ENCODE measurements at regions of chr6 and their contacts with region 1.

Region 1: DNA sequence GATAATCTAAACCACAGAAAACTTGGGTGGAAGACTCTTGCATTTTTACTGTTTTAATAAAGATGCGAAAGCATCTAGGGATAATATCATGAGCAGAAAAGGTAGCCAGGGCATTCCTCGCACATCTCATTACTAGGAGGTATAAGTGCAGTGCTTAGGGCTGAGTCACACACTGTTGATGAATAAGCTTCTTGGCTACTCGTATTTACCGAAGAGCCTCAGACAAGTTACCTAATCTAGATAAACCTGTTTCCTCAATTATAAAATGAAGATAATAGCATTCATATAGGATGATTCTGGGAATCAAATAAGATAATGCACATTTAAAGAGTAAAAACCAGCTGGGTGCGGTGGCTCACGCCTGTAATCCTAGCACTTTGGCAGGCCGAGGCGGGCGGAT is 791 bp upstream of the KIAA0319 start:
- DNase-seq: peak; percentile 86
- ATAC-seq: peak; percentile 85
- H3K4me3 ChIP-seq: peak overlapping the region; percentile 77
- H3K27ac ChIP-seq: peak overlapping the region; percentile 16; the same call in 1 of the 2 replicates
- H3K4me1 ChIP-seq: peaks cover 24% of the 10 kb centered on the region
- H3K27me3 ChIP-seq: no peaks in the 10 kb centered on the region
- CTCF ChIP-seq: no peak

Region 2: GRCh38 chr6:24431045-24431451 is 215.7 kb before region 1 on chr6:
- CTCF ChIA-PET with region 1: no interaction called
- POLR2A ChIA-PET with region 1: no interaction called
- intact Hi-C with region 1: loop called (anchors 5 kb)
- DNase-seq: peak; percentile 74
- ATAC-seq: peak; percentile 27; the same call in 1 of the 2 replicates
- H3K4me3 ChIP-seq: no peak overlapping the region
- H3K27ac ChIP-seq: no peak overlapping the region
- H3K4me1 ChIP-seq: peaks cover 37% of the 10 kb centered on the region
- H3K27me3 ChIP-seq: no peaks in the 10 kb centered on the region
- CTCF ChIP-seq: peak; percentile 89

Region 3: DNA sequence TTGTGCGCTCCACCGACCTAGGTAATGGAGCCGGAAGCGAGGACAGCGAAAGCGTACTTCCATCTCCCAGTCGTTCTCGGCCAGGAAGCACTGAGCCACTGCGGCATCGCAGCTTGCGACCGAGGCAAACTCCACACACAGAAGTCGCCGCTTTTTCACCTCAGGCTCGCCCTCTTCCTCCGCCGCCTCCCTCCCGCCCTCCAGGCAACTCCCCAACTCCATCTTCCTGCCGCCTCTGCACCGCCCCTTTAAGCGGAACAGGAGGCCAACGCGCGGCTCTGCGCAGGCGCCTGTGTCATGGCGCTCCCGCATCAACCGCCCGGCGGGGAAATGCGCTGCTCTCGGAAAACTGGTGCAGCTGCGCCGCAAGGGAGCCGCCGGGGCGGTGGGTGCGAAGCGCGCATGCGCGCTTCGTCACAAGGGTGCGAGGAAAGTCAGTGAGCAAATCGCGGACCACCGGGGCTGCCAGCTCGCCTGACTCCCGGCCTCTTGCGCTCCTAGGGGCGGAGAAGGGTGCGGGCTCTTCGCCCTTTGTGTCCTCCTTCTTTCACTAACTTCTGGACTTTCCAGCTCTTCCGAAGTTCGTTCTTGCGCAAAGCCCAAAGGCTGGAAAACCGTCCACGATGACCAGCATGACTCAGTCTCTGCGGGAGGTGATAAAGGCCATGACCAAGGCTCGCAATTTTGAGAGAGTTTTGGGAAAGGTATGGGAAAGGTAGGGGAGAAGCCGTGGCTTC is 20.0 kb after region 1 on chr6 and contains the starts of genes ACOT13 and TDP2:
- CTCF ChIA-PET with region 1: no interaction called
- POLR2A ChIA-PET with region 1: no interaction called
- intact Hi-C with region 1: loop called (anchors 2 kb)
- DNase-seq: peak; percentile 98
- ATAC-seq: peak; percentile 95
- H3K4me3 ChIP-seq: peak within 1 kb of the TSS; percentile 97
- H3K27ac ChIP-seq: peak within 1 kb of the TSS; percentile 75
- H3K4me1 ChIP-seq: peaks cover 20% of the 10 kb centered on the region
- H3K27me3 ChIP-seq: no peaks in the 10 kb centered on the region
- CTCF ChIP-seq: peak; percentile 49; the same call in 1 of the 2 replicates
- total RNA-seq, gene ACOT13: 13.5 and 17.9 TPM in 2 replicates
- total RNA-seq, gene TDP2: 20.6 and 24.2 TPM in 2 replicates

Region 4: DNA sequence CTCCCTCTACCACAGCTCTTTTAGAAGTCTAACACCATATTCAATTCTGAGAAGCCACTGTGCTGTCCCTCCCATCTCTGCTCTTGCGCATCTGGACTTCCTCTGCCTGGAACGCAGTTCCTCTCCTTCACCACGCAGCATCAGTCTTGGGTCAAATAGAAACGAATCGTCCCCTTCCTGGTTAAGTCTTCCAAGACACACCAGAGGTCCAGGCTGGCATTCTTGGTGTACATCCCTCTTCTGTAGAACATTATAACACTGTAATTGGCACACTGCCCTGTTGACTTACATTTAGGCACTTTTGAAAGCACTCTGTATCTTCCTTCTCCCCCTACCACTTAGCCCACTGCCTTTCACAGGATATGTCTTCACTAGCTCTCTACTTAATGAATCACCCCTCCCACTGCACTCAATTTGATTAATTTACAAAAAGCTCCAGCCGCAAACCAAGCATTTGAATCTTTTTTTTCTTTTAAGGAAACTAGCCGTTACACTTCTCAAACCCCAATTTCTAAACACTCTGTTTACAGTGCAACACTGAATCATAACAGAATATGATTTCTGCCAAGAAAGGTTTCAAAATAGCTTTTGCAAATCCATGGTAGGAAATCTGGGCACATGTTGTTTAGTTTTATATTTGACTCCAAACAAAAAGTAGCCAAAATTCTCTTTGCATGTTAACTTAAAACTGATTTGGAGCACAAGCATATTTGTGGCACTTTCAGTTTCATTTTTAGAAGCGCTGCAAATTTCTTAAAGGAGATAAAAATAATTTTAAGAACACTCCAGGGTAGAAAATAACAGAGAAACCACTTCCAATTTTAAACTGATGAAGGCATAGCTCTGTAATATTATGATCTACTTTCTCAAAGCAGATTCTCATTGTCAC is 491.7 kb after region 1 on chr6:
- CTCF ChIA-PET with region 1: no interaction called
- POLR2A ChIA-PET with region 1: no interaction called
- intact Hi-C with region 1: no loop called
- DNase-seq: peak; percentile 54
- ATAC-seq: peak; percentile 98
- H3K4me3 ChIP-seq: peak overlapping the region; percentile 69
- H3K27ac ChIP-seq: no peak overlapping the region
- H3K4me1 ChIP-seq: no peaks in the 10 kb centered on the region; the same call in 1 of the 2 replicates
- H3K27me3 ChIP-seq: no peaks in the 10 kb centered on the region
- CTCF ChIP-seq: no peak